Psoas muscle (tissue), 8 donors: ENCODE measurements at regions of chr4 and their contacts with region 1.

Region 1: GRCh38 chr4:147590249-147590920 is 26.8 kb upstream of the TMEM184C start:
- DNase-seq: peak; percentile 23 to 52
- ATAC-seq: no peak
- H3K4me3 ChIP-seq: no peak overlapping the region
- H3K27ac ChIP-seq: no peak overlapping the region
- H3K4me1 ChIP-seq: no peaks in the 10 kb centered on the region
- H3K27me3 ChIP-seq: no peaks in the 10 kb centered on the region
- CTCF ChIP-seq: peak; percentile 58

Region 2: GRCh38 chr4:147111033-147111367 is 479.4 kb before region 1 on chr4:
- intact Hi-C with region 1: loop called in 1 of 2 experiments (anchors 5 kb)
- DNase-seq: no peak
- ATAC-seq: no peak
- H3K4me3 ChIP-seq: no peak overlapping the region
- H3K27ac ChIP-seq: no peak overlapping the region
- H3K4me1 ChIP-seq: no peaks in the 10 kb centered on the region
- H3K27me3 ChIP-seq: no peaks in the 10 kb centered on the region
- CTCF ChIP-seq: peak; percentile 6

Region 3: GRCh38 chr4:147160908-147161513 is 429.4 kb before region 1 on chr4:
- intact Hi-C with region 1: loop called (anchors 5 to 10 kb)
- DNase-seq: no peak
- ATAC-seq: peak in 3 of 4 donors; percentile 39 to 64 (median 60)
- H3K4me3 ChIP-seq: no peak overlapping the region
- H3K27ac ChIP-seq: no peak overlapping the region
- H3K4me1 ChIP-seq: no peaks in the 10 kb centered on the region
- H3K27me3 ChIP-seq: no peaks in the 10 kb centered on the region
- CTCF ChIP-seq: peak; percentile 67

Region 4: GRCh38 chr4:147518846-147519767 is 71.3 kb before region 1 on chr4:
- intact Hi-C with region 1: loop called in 1 of 2 experiments (anchors 2 kb)
- DNase-seq: peak in 1 of 2 donors; percentile 17
- ATAC-seq: peak in 2 of 4 donors; percentile 61 to 70
- H3K4me3 ChIP-seq: no peak overlapping the region
- H3K27ac ChIP-seq: no peak overlapping the region
- H3K4me1 ChIP-seq: no peaks in the 10 kb centered on the region
- H3K27me3 ChIP-seq: no peaks in the 10 kb centered on the region
- CTCF ChIP-seq: peak; percentile 77

Region 5: DNA sequence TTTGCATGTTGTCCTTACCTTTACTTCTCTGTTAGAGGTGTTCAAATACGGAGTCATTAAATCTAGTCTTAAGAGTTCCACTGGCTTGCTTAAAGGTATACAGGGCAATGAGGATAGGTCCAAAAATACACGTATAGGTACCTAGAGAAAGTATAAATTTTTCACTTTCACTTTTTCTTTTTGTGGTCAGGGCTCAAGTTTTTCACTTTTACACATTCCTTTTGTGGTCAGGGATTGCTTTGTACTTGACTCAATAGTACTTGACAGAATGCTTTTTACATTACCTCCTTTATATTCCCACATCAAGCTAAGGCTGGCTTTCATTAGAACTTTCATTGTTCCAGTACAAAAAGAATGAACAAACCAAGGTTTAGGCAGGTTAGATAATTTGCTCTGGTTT is 48.6 kb after region 1 on chr4:
- intact Hi-C with region 1: no loop called
- DNase-seq: no peak
- ATAC-seq: no peak
- H3K4me3 ChIP-seq: no peak overlapping the region
- H3K27ac ChIP-seq: no peak overlapping the region
- H3K4me1 ChIP-seq: no peaks in the 10 kb centered on the region
- H3K27me3 ChIP-seq: no peaks in the 10 kb centered on the region
- CTCF ChIP-seq: no peak

Region 6: GRCh38 chr4:147731580-147732517 is 141.5 kb after region 1 on chr4 and contains the start of gene ARHGAP10:
- intact Hi-C with region 1: no loop called
- DNase-seq: peak; percentile 81 to 88
- ATAC-seq: peak; percentile 74 to 79 (median 76)
- H3K4me3 ChIP-seq: peak within 1 kb of the TSS; percentile 93
- H3K27ac ChIP-seq: peak within 1 kb of the TSS; percentile 97
- H3K4me1 ChIP-seq: peaks cover 29% of the 10 kb centered on the region
- H3K27me3 ChIP-seq: no peaks in the 10 kb centered on the region
- CTCF ChIP-seq: no peak
- total RNA-seq, gene ARHGAP10: 34.0 to 43.5 (median 37.3) TPM